Heart left ventricle (tissue), 16 donors: ENCODE measurements at regions of chr12 and their contacts with region 1.

Region 1: GRCh38 chr12:47797441-47797840 is 22.3 kb downstream of the HDAC7 start:
- DNase-seq: no peak
- ATAC-seq: peak in 2 of 4 donors; percentile 12 to 46
- H3K4me3 ChIP-seq: no peak overlapping the region
- H3K27ac ChIP-seq: peak overlapping the region in 1 of 12 donors; percentile 7
- H3K4me1 ChIP-seq: peaks cover 22 to 47% (median 42%) of the 10 kb centered on the region in 12 donors
- H3K27me3 ChIP-seq: no peaks in the 10 kb centered on the region
- CTCF ChIP-seq: peak in 11 of 12 donors; percentile 17 to 56 (median 38)
- POLR2A ChIP-seq: no peak

Region 2: DNA sequence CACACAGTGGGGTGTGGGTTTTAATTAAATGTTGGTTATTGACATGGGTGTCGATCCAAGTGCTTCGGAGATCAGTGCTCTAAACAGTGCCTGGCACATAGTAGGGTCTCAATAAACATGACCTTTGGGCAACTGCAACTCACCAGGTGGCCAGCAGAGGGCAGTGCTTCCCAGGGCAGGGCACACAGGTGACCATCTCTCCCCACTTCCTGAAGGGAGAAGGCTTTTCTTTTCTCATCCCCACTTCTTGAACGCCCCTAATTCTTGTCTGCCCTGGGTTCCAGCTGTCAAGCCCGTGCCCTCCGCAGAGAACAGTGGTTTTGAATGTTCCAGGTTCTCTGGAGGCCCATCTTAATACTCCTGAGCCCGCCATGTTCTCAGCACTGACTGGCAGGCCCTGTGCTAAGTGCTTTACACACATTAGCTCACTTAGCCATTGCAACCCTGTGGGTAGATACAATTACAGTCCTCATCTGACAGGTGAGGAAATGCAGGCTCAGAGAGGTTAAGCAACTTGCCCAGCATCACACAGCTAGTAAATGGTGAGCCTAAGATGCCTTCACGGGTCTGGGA is 55.1 kb before region 1 on chr12:
- intact Hi-C with region 1: no loop called
- DNase-seq: peak in 2 of 5 donors; percentile 51 to 81
- ATAC-seq: no peak
- H3K4me3 ChIP-seq: no peak overlapping the region
- H3K27ac ChIP-seq: peak overlapping the region in 1 of 12 donors; percentile 14
- H3K4me1 ChIP-seq: peaks cover 16 to 69% (median 40%) of the 10 kb centered on the region in 12 donors
- H3K27me3 ChIP-seq: no peaks in the 10 kb centered on the region
- CTCF ChIP-seq: peak; percentile 84 to 97 (median 90)
- POLR2A ChIP-seq: no peak

Region 3: DNA sequence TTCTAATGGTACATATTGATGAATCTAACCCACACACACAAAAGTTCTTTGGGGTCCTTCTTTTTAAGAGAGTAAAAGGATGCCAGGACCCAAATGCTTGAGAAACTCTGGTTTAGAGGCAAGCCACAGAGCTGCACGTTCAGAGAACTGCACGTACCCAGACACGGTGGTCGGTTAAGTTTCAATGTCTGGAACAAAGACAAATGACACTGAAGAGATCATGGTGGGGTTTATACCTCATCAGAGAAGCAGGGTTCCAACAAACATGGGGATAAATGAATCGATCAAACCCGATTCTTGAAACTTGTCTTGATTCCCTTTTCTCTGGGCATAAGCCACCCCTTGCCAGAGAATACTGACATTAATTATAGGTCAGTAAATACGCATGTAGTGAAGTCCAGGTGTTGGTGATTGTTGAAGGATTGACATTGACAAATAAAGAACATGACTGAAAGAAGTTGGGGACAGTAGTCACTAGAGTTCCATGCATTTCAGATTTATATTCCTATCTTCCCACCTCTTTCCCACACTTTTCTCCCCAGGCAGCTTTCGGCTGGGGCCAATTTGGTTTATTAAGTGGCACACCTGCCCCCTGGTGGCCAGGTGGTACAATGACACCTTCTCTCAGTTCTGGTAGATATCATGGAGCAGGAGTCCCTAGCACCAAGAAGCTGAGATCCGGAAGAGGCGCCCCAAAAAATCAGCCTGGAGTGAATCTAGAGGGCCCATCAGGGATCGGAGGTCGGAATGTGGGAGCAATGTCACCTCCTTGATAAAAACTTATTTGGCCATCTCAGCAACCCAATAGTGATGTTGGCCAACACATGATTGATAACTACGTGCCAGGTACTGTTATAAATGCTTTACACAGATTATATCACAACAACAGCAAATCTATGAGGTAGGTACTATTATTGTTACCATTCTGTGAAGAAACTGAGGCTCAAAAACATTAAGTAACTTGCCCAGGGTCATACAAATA is 40.0 kb after region 1 on chr12:
- intact Hi-C with region 1: loop called in 9 of 10 experiments (anchors 1 to 5 kb)
- DNase-seq: peak; percentile 69 to 81 (median 72)
- ATAC-seq: peak; percentile 52 to 78 (median 70)
- H3K4me3 ChIP-seq: no peak overlapping the region
- H3K27ac ChIP-seq: peak overlapping the region in 1 of 12 donors; percentile 36
- H3K4me1 ChIP-seq: peaks cover 0 to 33% (median 11%) of the 10 kb centered on the region in 12 donors
- H3K27me3 ChIP-seq: no peaks in the 10 kb centered on the region
- CTCF ChIP-seq: peak; percentile 89 to 99 (median 92)
- POLR2A ChIP-seq: no peak

Region 4: GRCh38 chr12:47900131-47901062 is 103.0 kb after region 1 on chr12:
- intact Hi-C with region 1: no loop called
- DNase-seq: no peak
- ATAC-seq: peak in 1 of 4 donors; percentile 6
- H3K4me3 ChIP-seq: no peak overlapping the region
- H3K27ac ChIP-seq: no peak overlapping the region
- H3K4me1 ChIP-seq: peaks cover 0 to 64% (median 11%) of the 10 kb centered on the region in 12 donors
- H3K27me3 ChIP-seq: peaks cover 0 to 26% (median 4%) of the 10 kb centered on the region in 9 donors
- CTCF ChIP-seq: peak in 5 of 12 donors; percentile 7 to 23 (median 11)
- POLR2A ChIP-seq: no peak